Activated CD4-positive, alpha-beta memory T cell treated with anti-CD3 and anti-CD28 coated beads for 36 hours (primary cell): ENCODE measurements at regions of chr3 and their contacts with region 1.

Region 1: GRCh38 chr3:189967254-189967865 is 153.3 kb downstream of the P3H2 start:
- DNase-seq: no peak
- H3K4me3 Mint-ChIP-seq: no peak overlapping the region
- H3K27ac Mint-ChIP-seq: no peak overlapping the region
- H3K4me1 Mint-ChIP-seq: no peaks in the 10 kb centered on the region
- H3K27me3 Mint-ChIP-seq: no peaks in the 10 kb centered on the region

Region 2: DNA sequence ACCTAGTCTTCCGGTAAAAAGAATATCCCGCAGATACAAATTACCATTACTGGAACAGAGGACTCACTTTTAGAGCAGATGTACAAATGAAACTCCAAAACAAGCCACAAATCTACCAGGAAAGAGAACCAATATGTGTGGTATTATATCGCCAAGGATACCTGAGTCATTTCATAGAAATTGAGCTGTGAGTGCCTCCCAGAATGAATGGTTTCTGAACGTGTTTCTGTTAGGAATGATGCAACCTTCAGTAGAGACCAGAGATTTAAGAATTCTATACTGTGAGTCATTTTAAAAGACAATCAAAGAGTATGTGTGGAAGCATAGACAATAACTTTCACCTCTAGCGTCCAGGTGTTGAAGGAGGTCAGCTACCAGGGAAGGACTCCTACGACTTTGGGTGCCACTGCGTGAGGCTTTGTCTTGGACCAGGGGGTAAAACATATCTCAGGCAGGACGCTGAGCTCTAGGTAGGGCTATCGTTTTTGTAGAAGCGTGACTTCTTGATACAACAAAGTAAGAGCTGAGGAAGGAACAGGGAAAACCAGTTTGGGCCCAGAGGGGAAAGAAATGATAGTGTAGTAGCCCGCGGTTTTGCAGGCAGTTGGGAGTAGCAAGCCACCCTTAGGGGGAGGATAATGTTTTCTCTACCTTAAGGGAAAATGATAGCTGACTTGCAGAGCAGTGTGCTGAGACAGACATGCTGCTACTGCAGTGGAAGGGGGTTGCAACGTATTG is 125.7 kb before region 1 on chr3:
- CTCF ChIA-PET with region 1: no interaction called
- POLR2A ChIA-PET with region 1: no interaction called
- intact Hi-C with region 1: no loop called
- DNase-seq: no peak
- H3K4me3 Mint-ChIP-seq: no peak overlapping the region
- H3K27ac Mint-ChIP-seq: no peak overlapping the region
- H3K4me1 Mint-ChIP-seq: peaks cover 12% of the 10 kb centered on the region
- H3K27me3 Mint-ChIP-seq: peaks cover 3% of the 10 kb centered on the region

Region 3: GRCh38 chr3:190205739-190206138 is 238.4 kb after region 1 on chr3:
- CTCF ChIA-PET with region 1: interaction called, 12 read pairs
- POLR2A ChIA-PET with region 1: no interaction called
- intact Hi-C with region 1: loop called (anchors 1 kb)
- DNase-seq: no peak
- H3K4me3 Mint-ChIP-seq: no peak overlapping the region
- H3K27ac Mint-ChIP-seq: no peak overlapping the region
- H3K4me1 Mint-ChIP-seq: peaks cover 13% of the 10 kb centered on the region
- H3K27me3 Mint-ChIP-seq: peaks cover 23% of the 10 kb centered on the region

Region 4: DNA sequence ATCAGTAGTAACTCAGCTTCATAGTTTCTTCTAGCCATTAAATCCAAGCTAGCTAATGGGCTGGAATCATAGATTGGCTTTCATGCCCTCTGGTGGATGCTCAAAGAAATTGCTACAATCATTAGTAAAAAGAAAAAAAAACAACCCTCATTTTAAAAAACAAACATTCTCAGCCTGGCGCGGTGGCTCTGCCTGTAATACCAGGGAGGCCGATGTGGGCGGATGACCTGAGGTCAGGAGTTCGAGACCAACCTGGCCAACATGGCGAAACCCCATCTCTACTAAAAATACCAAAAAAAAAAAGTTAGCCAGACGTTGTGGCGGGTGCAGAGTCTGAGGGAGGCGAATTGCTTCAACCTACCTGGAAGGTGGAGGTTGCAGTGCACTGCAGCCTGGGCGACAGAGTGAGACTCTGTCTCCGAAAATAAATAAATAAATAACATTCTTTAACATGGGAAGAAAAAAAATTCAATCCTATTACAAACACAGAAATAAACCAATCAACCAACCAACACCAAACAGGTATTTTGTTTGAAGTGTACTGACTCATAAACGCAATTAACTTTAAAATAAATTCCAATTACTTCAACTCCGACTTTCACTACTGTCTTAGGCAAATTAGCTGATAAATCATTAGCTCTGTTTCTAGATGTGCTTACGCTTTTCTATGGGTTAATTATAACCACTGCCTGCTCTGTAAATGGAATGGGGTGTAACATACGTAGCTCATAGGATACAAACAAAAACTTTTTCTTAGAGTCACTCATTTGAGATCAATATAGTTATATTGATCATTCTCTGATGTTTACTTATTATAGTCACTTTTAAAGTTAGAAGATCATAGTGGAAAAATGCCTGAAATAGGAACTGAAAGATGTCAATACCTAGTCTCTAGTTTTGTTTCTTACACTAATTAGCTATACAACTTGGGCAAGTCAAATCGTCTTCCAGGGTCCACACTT is 457.4 kb after region 1 on chr3:
- CTCF ChIA-PET with region 1: interaction called, 27 read pairs
- POLR2A ChIA-PET with region 1: no interaction called
- intact Hi-C with region 1: loop called (anchors 2 kb)
- DNase-seq: peak; percentile 66
- H3K4me3 Mint-ChIP-seq: peak overlapping the region; percentile 24
- H3K27ac Mint-ChIP-seq: no peak overlapping the region
- H3K4me1 Mint-ChIP-seq: peaks cover 8% of the 10 kb centered on the region
- H3K27me3 Mint-ChIP-seq: no peaks in the 10 kb centered on the region

Region 5: GRCh38 chr3:191051037-191051436 is 1083.7 kb after region 1 on chr3:
- CTCF ChIA-PET with region 1: interaction called, 4 read pairs
- POLR2A ChIA-PET with region 1: no interaction called
- intact Hi-C with region 1: loop called (anchors 2 kb)
- DNase-seq: no peak
- H3K4me3 Mint-ChIP-seq: no peak overlapping the region
- H3K27ac Mint-ChIP-seq: no peak overlapping the region
- H3K4me1 Mint-ChIP-seq: no peaks in the 10 kb centered on the region
- H3K27me3 Mint-ChIP-seq: no peaks in the 10 kb centered on the region